K562 (cell line): ENCODE measurements at regions of chr6 and their contacts with region 1.

Region 1: GRCh38 chr6:53651764-53652401 is 13.7 kb downstream of the KLHL31 start:
- DNase-seq: no peak
- ATAC-seq: peak; percentile 69
- H3K4me3 ChIP-seq: no peak overlapping the region
- H3K27ac ChIP-seq: no peak overlapping the region
- H3K4me1 ChIP-seq: peaks cover 0 to 8% of the 10 kb centered on the region in 2 experiments; a peak in 3 of 5 replicates
- H3K27me3 ChIP-seq: peaks cover 3 to 18% of the 10 kb centered on the region in 2 experiments; a peak in 3 of 5 replicates
- CTCF ChIP-seq: no peak
- EP300 ChIP-seq: no peak
- POLR2A ChIP-seq: no peak
- RAD21 ChIP-seq: no peak

Region 2: GRCh38 chr6:53506872-53507271 is 145.0 kb before region 1 on chr6:
- CTCF ChIA-PET with region 1: no interaction called
- POLR2A ChIA-PET with region 1: no interaction called
- in situ Hi-C with region 1: loop called (anchors 5 kb)
- intact Hi-C with region 1: no loop called
- DNase-seq: no peak
- ATAC-seq: no peak
- H3K4me3 ChIP-seq: no peak overlapping the region
- H3K27ac ChIP-seq: no peak overlapping the region
- H3K4me1 ChIP-seq: no peaks in the 10 kb centered on the region
- H3K27me3 ChIP-seq: no peaks in the 10 kb centered on the region
- CTCF ChIP-seq: no peak
- EP300 ChIP-seq: no peak
- POLR2A ChIP-seq: no peak
- RAD21 ChIP-seq: no peak

Region 3: GRCh38 chr6:53513519-53513966 is 138.3 kb before region 1 on chr6:
- CTCF ChIA-PET with region 1: interaction called, 12 read pairs
- POLR2A ChIA-PET with region 1: no interaction called
- in situ Hi-C with region 1: loop called (anchors 5 kb)
- intact Hi-C with region 1: no loop called
- DNase-seq: no peak
- ATAC-seq: no peak
- H3K4me3 ChIP-seq: no peak overlapping the region
- H3K27ac ChIP-seq: no peak overlapping the region
- H3K4me1 ChIP-seq: no peaks in the 10 kb centered on the region
- H3K27me3 ChIP-seq: no peaks in the 10 kb centered on the region
- CTCF ChIP-seq: peak in 1 of 3 experiments; percentile 24; a peak in 2 of 6 replicates
- EP300 ChIP-seq: no peak
- POLR2A ChIP-seq: no peak
- RAD21 ChIP-seq: 0 out of 4 replicates have a peak, but pooled peaks of 1 of the 2 experiments have one; percentile 10

Region 4: GRCh38 chr6:53544470-53545308 is 107.2 kb before region 1 on chr6 and contains the start of gene GCLC:
- CTCF ChIA-PET with region 1: interaction called, 23 read pairs
- POLR2A ChIA-PET with region 1: no interaction called
- in situ Hi-C with region 1: no loop called
- intact Hi-C with region 1: loop called (anchors 1 kb)
- DNase-seq: peak; percentile 87 to 97 (median 91)
- ATAC-seq: peak; percentile 83
- H3K4me3 ChIP-seq: peak within 1 kb of the TSS; percentile 77
- H3K27ac ChIP-seq: peak within 1 kb of the TSS; percentile 88
- H3K4me1 ChIP-seq: peaks cover 23 to 40% of the 10 kb centered on the region in 2 experiments
- H3K27me3 ChIP-seq: no peaks in the 10 kb centered on the region
- CTCF ChIP-seq: peak; percentile 63 to 88 (median 75)
- EP300 ChIP-seq: 0 out of 2 replicates have a peak, but pooled peaks have one; percentile 22
- POLR2A ChIP-seq: peak; percentile 79
- RAD21 ChIP-seq: peak; percentile 87 to 89
- polyA plus RNA-seq, gene GCLC: 3.9 to 5.1 TPM